MCF 10A (cell line): ENCODE measurements at regions of chr2 and their contacts with region 1.

Region 1: DNA sequence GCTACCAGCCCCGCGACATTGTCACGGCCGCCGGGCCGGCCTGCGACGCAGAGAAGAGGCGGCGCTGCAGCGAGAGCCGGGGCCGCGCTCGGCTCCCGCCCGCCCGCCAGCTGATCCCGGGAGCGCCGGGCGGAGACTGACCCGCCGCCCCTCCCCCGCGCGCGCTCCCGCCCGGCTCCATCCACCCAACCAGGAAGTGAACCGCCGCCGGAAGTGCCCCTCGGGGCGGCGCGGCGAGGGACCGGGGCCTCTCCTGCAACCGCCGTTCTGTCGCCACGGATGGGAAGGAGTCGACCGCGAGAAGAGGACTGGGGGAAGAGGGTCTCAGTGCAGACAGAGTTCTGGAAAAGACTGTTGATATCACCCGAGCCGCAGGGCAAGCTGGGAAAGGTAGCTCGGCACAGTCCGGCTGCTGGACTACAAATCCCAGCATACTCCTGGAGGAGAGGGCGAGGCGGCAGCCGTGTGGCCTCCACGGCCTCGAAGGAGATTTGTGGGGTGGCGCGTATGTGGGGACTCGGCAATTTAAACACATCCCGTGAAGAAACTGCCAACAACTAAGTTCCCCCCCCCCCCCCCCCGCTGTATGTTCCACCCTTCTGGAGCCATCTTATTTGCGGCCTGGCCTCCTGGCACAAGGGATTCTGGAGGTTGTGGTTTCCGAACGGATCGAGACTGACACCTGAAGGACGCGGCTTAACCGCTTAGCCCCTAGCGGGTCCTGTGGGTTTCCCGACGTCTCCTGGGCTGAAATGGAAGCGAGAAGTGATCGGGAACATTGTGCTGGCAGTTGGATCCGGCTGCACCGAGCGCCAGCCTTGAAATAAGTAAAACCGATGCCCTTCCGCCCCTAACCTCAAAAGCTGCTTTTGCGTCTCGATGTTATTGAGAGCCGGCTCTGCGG is at the start of gene AAK1:
- DNase-seq: peak; percentile 86
- H3K4me3 Mint-ChIP-seq: peak within 1 kb of the TSS; percentile 73
- H3K27ac Mint-ChIP-seq: peak within 1 kb of the TSS; percentile 74
- H3K4me1 Mint-ChIP-seq: peaks cover 48% of the 10 kb centered on the region
- H3K27me3 Mint-ChIP-seq: no peaks in the 10 kb centered on the region
- CTCF ChIP-seq: no peak
- total RNA-seq, gene AAK1: 75.8 and 108 TPM in 2 replicates

Region 2: DNA sequence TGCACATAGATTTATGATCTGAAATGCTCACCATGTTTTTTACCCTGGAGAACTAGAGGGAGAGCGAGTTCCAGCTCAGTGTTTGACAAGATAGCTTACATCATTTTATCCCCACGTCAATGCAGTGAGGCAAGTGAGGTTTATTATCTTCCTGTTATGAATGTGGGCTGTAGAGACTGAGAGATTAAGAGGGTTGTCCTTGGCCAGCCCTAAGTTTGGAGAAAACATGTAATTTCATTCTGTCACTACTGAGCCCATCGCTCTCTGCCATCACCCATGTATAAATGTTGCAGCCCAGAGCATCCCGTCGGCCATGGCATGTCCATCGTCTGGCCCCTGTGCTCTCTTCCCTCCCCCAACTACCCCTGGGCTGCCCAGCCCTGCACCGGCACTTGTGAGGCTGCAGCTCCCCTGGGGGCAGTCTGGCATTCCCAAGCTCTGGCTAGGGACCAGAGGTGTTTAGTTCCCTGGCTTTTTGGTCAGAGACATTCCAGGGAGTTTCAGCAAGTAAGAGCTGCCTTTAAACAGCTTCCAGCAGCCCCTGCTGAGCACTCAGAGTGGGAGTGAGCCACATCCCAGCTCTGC is 494.1 kb before region 1 on chr2:
- CTCF ChIA-PET with region 1: no interaction called
- POLR2A ChIA-PET with region 1: no interaction called
- intact Hi-C with region 1: no loop called
- DNase-seq: peak; percentile 23
- H3K4me3 Mint-ChIP-seq: no peak overlapping the region
- H3K27ac Mint-ChIP-seq: no peak overlapping the region
- H3K4me1 Mint-ChIP-seq: peaks cover 5% of the 10 kb centered on the region
- H3K27me3 Mint-ChIP-seq: no peaks in the 10 kb centered on the region
- CTCF ChIP-seq: no peak

Region 3: GRCh38 chr2:69436938-69437750 is 206.7 kb before region 1 on chr2 and contains the start of gene NFU1:
- CTCF ChIA-PET with region 1: no interaction called
- POLR2A ChIA-PET with region 1: interaction called, 16 read pairs
- intact Hi-C with region 1: loop called (anchors 5 kb)
- DNase-seq: peak; percentile 86
- H3K4me3 Mint-ChIP-seq: peak within 1 kb of the TSS; percentile 81
- H3K27ac Mint-ChIP-seq: peak within 1 kb of the TSS; percentile 99
- H3K4me1 Mint-ChIP-seq: peaks cover 13% of the 10 kb centered on the region
- H3K27me3 Mint-ChIP-seq: no peaks in the 10 kb centered on the region
- CTCF ChIP-seq: peak; percentile 19
- total RNA-seq, gene NFU1: 29.5 and 32.3 TPM in 2 replicates

Region 4: GRCh38 chr2:69559442-69560146 is 84.3 kb before region 1 on chr2:
- CTCF ChIA-PET with region 1: interaction called, 9 read pairs
- POLR2A ChIA-PET with region 1: interaction called, 4 read pairs
- intact Hi-C with region 1: loop called (anchors 2 kb)
- DNase-seq: peak; percentile 71
- H3K4me3 Mint-ChIP-seq: no peak overlapping the region
- H3K27ac Mint-ChIP-seq: no peak overlapping the region
- H3K4me1 Mint-ChIP-seq: peaks cover 6% of the 10 kb centered on the region
- H3K27me3 Mint-ChIP-seq: no peaks in the 10 kb centered on the region
- CTCF ChIP-seq: peak; percentile 64

Region 5: GRCh38 chr2:69565431-69565839 is 78.4 kb before region 1 on chr2:
- CTCF ChIA-PET with region 1: interaction called, 9 read pairs
- POLR2A ChIA-PET with region 1: interaction called, 55 read pairs
- intact Hi-C with region 1: no loop called
- DNase-seq: peak; percentile 53
- H3K4me3 Mint-ChIP-seq: no peak overlapping the region
- H3K27ac Mint-ChIP-seq: no peak overlapping the region
- H3K4me1 Mint-ChIP-seq: peaks cover 31% of the 10 kb centered on the region
- H3K27me3 Mint-ChIP-seq: no peaks in the 10 kb centered on the region
- CTCF ChIP-seq: peak; percentile 47

Region 6: DNA sequence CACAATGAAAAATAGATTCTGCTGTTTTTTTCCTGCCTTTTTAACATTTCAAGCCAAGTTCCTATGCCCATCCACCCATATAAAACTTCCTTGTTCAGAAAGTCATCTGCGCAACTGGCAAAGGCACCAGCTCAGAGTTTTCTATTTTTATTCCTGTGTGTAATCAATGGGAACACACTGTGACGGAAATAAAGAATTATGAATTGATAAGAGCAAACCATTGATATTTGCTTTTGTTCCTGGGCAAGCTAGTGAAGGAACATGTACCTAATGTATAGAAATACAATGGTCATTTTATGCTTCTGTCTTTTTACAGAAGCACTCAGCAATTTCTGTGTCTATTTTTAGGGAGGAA is 30.4 kb after region 1 on chr2:
- CTCF ChIA-PET with region 1: no interaction called
- POLR2A ChIA-PET with region 1: interaction called, 11 read pairs
- intact Hi-C with region 1: no loop called
- DNase-seq: no peak
- H3K4me3 Mint-ChIP-seq: no peak overlapping the region
- H3K27ac Mint-ChIP-seq: no peak overlapping the region
- H3K4me1 Mint-ChIP-seq: peaks cover 8% of the 10 kb centered on the region
- H3K27me3 Mint-ChIP-seq: no peaks in the 10 kb centered on the region
- CTCF ChIP-seq: no peak